ENCODE measurements at regions of chr17 and their contacts with region 1.

Region 1: GRCh38 chr17:45228763-45229539 is 7.3 kb downstream of the FMNL1 start:
- DNase-seq: peak; percentile 68
- ATAC-seq: peak; percentile 56
- H3K4me3 ChIP-seq: peak overlapping the region; percentile 89
- H3K27ac ChIP-seq: peak overlapping the region; percentile 100
- H3K4me1 ChIP-seq: peaks cover 66% of the 10 kb centered on the region
- H3K27me3 ChIP-seq: no peaks in the 10 kb centered on the region
- CTCF ChIP-seq: no peak
- EP300 ChIP-seq: peak; percentile 84 to 91; a peak in 2 of 4 replicates
- POLR2A ChIP-seq: peak; percentile 75
- RAD21 ChIP-seq: no peak

Region 2: GRCh38 chr17:45161019-45161825 is 67.7 kb before region 1 on chr17:
- CTCF ChIA-PET with region 1: interaction called, 4 read pairs
- POLR2A ChIA-PET with region 1: interaction called, 15 read pairs
- RAD21 ChIA-PET with region 1: interaction called, 5 read pairs
- SMC1A ChIA-PET with region 1: interaction called, 5 read pairs
- in situ Hi-C with region 1: no loop called
- intact Hi-C with region 1: no loop called
- DNase-seq: peak; percentile 100
- ATAC-seq: peak; percentile 96
- H3K4me3 ChIP-seq: peak overlapping the region; percentile 86
- H3K27ac ChIP-seq: peak overlapping the region; percentile 98
- H3K4me1 ChIP-seq: peaks cover 8% of the 10 kb centered on the region
- H3K27me3 ChIP-seq: no peaks in the 10 kb centered on the region
- CTCF ChIP-seq: no peak
- EP300 ChIP-seq: peak in 1 of 2 experiments; percentile 69; a peak in 2 of 4 replicates
- POLR2A ChIP-seq: peak; percentile 95
- RAD21 ChIP-seq: no peak

Region 3: DNA sequence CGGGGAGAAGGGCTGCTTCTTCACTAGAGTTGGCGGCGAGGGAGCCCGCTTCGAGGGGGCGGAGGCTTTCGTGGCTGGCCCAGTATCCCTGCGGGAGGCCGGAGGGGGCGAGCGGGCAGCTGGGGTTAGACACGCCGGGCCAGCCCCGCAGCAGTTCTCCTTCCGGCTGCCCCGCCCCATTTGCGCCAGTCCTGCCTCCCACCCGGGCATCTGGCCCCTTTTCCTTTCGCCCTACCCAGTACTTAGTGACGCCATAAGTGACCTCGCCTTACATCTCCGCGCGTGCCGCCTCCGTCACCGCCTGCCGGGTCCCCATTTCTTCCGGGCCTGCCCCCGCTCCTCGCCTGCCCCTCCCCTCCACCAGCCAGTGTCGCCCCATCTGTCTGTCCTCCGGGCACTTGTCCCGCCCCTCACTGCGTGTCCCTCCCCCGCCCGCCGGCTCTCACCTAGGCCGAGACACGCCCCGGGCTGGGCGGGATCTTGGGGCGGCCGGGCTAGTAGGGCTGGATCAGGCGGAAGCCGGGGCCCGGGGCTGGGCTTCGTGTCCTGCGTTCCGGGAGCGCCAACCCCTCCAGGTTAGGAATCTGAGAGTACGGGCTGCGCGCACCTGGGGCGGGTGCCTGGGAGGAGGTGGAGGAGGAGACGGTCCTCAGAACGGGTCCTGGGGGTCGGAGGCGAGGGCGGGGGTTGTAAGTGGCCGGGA is 18.6 kb after region 1 on chr17:
- CTCF ChIA-PET with region 1: interaction called, 20 read pairs
- POLR2A ChIA-PET with region 1: interaction called, 18 read pairs
- RAD21 ChIA-PET with region 1: interaction called, 10 read pairs
- SMC1A ChIA-PET with region 1: interaction called, 8 read pairs
- in situ Hi-C with region 1: no loop called
- intact Hi-C with region 1: no loop called
- DNase-seq: peak; percentile 78
- ATAC-seq: peak; percentile 95
- H3K4me3 ChIP-seq: peak overlapping the region; percentile 89
- H3K27ac ChIP-seq: peak overlapping the region; percentile 98
- H3K4me1 ChIP-seq: peaks cover 14% of the 10 kb centered on the region
- H3K27me3 ChIP-seq: no peaks in the 10 kb centered on the region
- CTCF ChIP-seq: no peak
- EP300 ChIP-seq: no peak; a peak in 1 of 4 replicates
- POLR2A ChIP-seq: peak; percentile 91
- RAD21 ChIP-seq: no peak

Region 4: DNA sequence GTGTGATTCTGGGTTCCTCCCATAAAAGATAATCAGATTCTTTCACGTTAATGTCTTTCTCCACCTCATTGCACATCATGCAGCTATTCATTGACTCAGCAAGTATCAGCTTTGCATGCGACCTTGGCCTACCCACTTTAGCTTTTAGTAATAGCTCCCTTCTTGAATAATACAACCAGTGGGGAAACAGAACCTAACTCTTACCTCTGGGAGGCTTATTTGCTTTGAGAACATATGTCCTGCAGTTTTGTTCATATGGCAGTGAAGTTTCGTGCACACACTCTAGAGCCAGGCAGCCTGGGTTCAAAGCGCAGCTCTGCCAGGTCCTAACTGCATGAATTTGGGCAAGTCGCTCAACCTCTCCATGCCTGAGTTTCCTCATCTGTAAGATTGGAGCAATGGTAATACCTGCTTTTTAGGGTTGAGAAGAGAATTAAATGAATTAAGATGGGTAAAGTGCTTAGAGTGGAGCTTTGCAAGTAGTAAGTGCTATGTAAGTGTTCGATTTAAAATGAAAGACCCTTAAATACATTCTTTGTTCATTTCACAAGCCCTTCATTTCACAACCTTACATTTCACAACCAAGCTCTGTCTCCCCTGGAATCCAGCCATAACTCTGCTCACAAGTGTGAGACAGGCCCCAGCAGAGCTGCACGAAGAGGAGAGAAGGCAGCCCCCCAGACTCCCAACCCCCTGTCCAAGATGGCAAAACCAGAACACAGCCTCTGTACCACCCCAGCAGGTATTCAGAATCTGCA is 694.7 kb after region 1 on chr17:
- CTCF ChIA-PET with region 1: no interaction called
- POLR2A ChIA-PET with region 1: no interaction called
- RAD21 ChIA-PET with region 1: no interaction called
- SMC1A ChIA-PET with region 1: no interaction called
- in situ Hi-C with region 1: no loop called
- intact Hi-C with region 1: no loop called
- DNase-seq: no peak
- ATAC-seq: no peak
- H3K4me3 ChIP-seq: no peak overlapping the region
- H3K27ac ChIP-seq: no peak overlapping the region
- H3K4me1 ChIP-seq: no peaks in the 10 kb centered on the region
- H3K27me3 ChIP-seq: peaks cover 0 to 4% of the 10 kb centered on the region in 2 experiments; a peak in 2 of 4 replicates
- CTCF ChIP-seq: no peak
- EP300 ChIP-seq: no peak
- POLR2A ChIP-seq: no peak
- RAD21 ChIP-seq: no peak

Measured in GM12878 (cell line).